ENCODE measurements at regions of chr12 and their contacts with region 1.

Region 1: GRCh38 chr12:50074936-50075807 is 10.0 kb upstream of the SMARCD1 start:
- DNase-seq: peak; percentile 87
- ATAC-seq: peak; percentile 97
- H3K4me3 ChIP-seq: no peak overlapping the region
- H3K4me3 Mint-ChIP-seq: no peak overlapping the region
- H3K27ac ChIP-seq: no peak overlapping the region
- H3K27ac Mint-ChIP-seq: no peak overlapping the region
- H3K4me1 ChIP-seq: peaks cover 0 to 12% of the 10 kb centered on the region in 2 donors
- H3K4me1 Mint-ChIP-seq: peaks cover 4% of the 10 kb centered on the region
- H3K27me3 ChIP-seq: no peaks in the 10 kb centered on the region
- H3K27me3 Mint-ChIP-seq: peaks cover 11% of the 10 kb centered on the region
- CTCF ChIP-seq: peak; percentile 95

Region 2: GRCh38 chr12:49903695-49904423 is 171.3 kb before region 1 on chr12 and contains the start of gene FAIM2:
- CTCF ChIA-PET with region 1: no interaction called
- POLR2A ChIA-PET with region 1: no interaction called
- intact Hi-C with region 1: no loop called
- DNase-seq: peak; percentile 36
- ATAC-seq: peak; percentile 54
- H3K4me3 ChIP-seq: peak within 1 kb of the TSS in 2 of 5 experiments; percentile 33
- H3K4me3 Mint-ChIP-seq: peak within 1 kb of the TSS; percentile 79
- H3K27ac ChIP-seq: no peak within 1 kb of the TSS
- H3K27ac Mint-ChIP-seq: no peak within 1 kb of the TSS
- H3K4me1 ChIP-seq: peaks cover 11% of the 10 kb centered on the region in 2 donors
- H3K4me1 Mint-ChIP-seq: peaks cover 12% of the 10 kb centered on the region
- H3K27me3 ChIP-seq: peaks cover 0 to 26% (median 6%) of the 10 kb centered on the region in 4 experiments
- H3K27me3 Mint-ChIP-seq: peaks cover 39% of the 10 kb centered on the region
- CTCF ChIP-seq: no peak
- total RNA-seq, gene FAIM2: not detected in 2 replicates

Region 3: GRCh38 chr12:50055831-50056638 is 19.1 kb before region 1 on chr12:
- CTCF ChIA-PET with region 1: interaction called, 16 read pairs
- POLR2A ChIA-PET with region 1: no interaction called
- intact Hi-C with region 1: no loop called
- DNase-seq: peak; percentile 79
- ATAC-seq: peak; percentile 79
- H3K4me3 ChIP-seq: peak overlapping the region in 2 of 5 experiments; percentile 13 to 21
- H3K4me3 Mint-ChIP-seq: peak overlapping the region; percentile 92
- H3K27ac ChIP-seq: no peak overlapping the region
- H3K27ac Mint-ChIP-seq: peak overlapping the region; percentile 34
- H3K4me1 ChIP-seq: peaks cover 22 to 23% of the 10 kb centered on the region in 2 donors
- H3K4me1 Mint-ChIP-seq: peaks cover 21% of the 10 kb centered on the region
- H3K27me3 ChIP-seq: peaks cover 0 to 60% (median 27%) of the 10 kb centered on the region in 4 experiments
- H3K27me3 Mint-ChIP-seq: peaks cover 67% of the 10 kb centered on the region
- CTCF ChIP-seq: peak; percentile 97

Region 4: DNA sequence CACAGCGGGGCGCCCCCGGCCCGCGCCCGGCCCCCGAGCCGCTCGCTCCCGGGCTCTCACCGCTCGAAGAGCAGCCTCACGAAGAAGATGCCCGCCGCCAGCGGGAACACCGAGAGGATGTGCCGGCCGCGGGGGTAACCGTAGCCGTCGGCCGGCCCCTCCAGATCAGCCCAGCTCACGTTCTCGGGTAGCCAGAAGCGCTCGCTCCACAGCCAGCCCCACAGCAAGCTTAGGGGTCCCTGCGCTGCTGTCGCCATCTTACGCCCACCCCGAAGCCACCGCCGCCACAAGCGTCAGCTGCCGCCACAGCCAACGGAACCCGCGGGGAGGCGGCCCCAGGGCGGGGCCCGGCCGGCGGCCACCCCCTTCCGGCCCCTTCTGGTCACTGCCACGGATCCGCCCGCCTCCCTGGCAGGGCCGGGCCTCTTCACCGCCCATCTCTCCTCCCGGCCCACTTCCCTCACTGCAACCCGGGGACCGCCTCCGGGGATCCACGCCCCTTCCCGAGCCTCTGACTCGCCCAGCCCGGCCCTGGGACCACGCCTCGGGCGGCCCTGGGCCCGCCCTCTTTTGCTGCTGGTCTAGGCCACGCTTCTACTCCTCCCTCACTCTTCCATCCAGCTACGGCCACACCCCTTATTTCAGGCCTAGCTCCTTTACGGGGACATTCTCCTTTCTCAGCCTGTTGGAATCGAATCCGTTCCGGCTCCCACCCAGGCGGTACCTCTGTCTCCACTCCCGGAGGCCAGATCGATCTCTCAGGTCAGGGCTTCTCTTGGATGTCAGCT is 92.1 kb after region 1 on chr12 and contains the start of gene CERS5:
- CTCF ChIA-PET with region 1: interaction called, 343 read pairs
- POLR2A ChIA-PET with region 1: no interaction called
- intact Hi-C with region 1: no loop called
- DNase-seq: peak; percentile 97
- ATAC-seq: peak; percentile 98
- H3K4me3 ChIP-seq: peak within 1 kb of the TSS; percentile 70 to 99 (median 74)
- H3K4me3 Mint-ChIP-seq: peak within 1 kb of the TSS; percentile 95
- H3K27ac ChIP-seq: peak within 1 kb of the TSS; percentile 83 to 90
- H3K27ac Mint-ChIP-seq: peak within 1 kb of the TSS; percentile 95
- H3K4me1 ChIP-seq: peaks cover 17 to 19% of the 10 kb centered on the region in 2 donors
- H3K4me1 Mint-ChIP-seq: peaks cover 25% of the 10 kb centered on the region
- H3K27me3 ChIP-seq: no peaks in the 10 kb centered on the region
- H3K27me3 Mint-ChIP-seq: no peaks in the 10 kb centered on the region
- CTCF ChIP-seq: no peak
- total RNA-seq, gene CERS5: 70.9 and 72.0 TPM in 2 replicates

Region 5: DNA sequence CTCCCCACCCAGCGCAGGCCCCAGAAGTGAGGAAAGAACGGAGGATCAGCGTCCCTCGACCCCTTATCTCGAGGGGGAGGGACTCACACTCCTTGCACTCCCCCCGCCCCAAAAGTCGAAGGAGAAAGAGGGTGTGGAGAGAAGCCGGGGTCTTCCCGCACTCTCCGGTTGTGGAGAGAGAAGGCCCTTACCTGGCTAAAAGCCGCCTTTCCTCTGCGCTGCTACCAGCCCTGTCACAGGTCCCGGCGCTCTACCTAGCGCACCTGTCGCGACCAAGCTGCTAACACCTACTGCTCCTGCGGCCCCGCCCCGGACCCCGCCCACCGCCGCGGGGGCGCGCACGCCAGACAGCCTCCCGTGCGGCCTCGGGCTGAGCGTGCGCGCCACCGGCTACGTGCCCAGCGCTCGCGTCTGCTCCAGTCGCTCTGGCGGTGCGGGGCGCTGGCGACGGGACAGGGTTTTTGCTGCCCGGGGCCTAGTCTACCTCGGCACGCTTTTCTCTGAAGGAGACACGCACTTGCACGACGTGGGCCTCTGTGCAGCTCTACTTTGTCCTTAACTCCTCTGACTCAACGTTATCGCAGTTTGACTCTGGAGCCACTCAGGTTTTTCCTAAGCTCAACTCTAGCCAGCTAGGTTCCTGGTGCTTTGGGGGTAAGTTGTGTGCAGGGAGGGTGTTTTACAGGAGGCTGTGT is 208.2 kb after region 1 on chr12 and contains the start of gene LIMA1:
- CTCF ChIA-PET with region 1: interaction called, 4 read pairs
- POLR2A ChIA-PET with region 1: no interaction called
- intact Hi-C with region 1: loop called (anchors 1 kb)
- DNase-seq: peak; percentile 93
- ATAC-seq: peak; percentile 98
- H3K4me3 ChIP-seq: peak within 1 kb of the TSS; percentile 61 to 86 (median 80)
- H3K4me3 Mint-ChIP-seq: peak within 1 kb of the TSS; percentile 95
- H3K27ac ChIP-seq: peak within 1 kb of the TSS; percentile 19 to 74
- H3K27ac Mint-ChIP-seq: peak within 1 kb of the TSS; percentile 83
- H3K4me1 ChIP-seq: peaks cover 11 to 18% of the 10 kb centered on the region in 2 donors
- H3K4me1 Mint-ChIP-seq: peaks cover 13% of the 10 kb centered on the region
- H3K27me3 ChIP-seq: peaks cover 0 to 8% (median 0%) of the 10 kb centered on the region in 4 experiments
- H3K27me3 Mint-ChIP-seq: peaks cover 4% of the 10 kb centered on the region
- CTCF ChIP-seq: peak; percentile 47
- total RNA-seq, gene LIMA1: 2.1 and 2.9 TPM in 2 replicates

Region 6: DNA sequence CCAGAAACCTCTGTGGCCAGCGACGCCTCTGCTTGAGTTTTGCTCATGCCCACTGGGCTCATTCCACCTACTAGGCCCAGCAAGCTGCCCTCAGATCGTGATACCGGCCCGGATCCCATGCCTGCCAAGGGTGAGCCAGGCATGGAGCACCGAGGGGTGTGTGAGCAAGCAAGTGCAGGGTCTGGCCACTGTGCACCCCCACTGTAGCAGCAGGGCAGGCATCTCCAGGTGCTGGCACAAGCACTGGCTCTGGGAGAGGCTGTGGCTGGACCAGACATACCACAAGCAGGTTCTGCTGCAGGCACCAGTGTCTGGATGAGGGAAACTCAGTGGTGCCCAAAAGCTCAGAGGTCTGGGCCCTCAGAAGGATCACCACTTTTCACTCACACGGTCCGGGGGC is 300.6 kb after region 1 on chr12:
- CTCF ChIA-PET with region 1: no interaction called
- POLR2A ChIA-PET with region 1: no interaction called
- intact Hi-C with region 1: no loop called
- DNase-seq: no peak
- ATAC-seq: no peak
- H3K4me3 ChIP-seq: no peak overlapping the region
- H3K4me3 Mint-ChIP-seq: no peak overlapping the region
- H3K27ac ChIP-seq: no peak overlapping the region
- H3K27ac Mint-ChIP-seq: no peak overlapping the region
- H3K4me1 ChIP-seq: no peaks in the 10 kb centered on the region
- H3K4me1 Mint-ChIP-seq: no peaks in the 10 kb centered on the region
- H3K27me3 ChIP-seq: no peaks in the 10 kb centered on the region
- H3K27me3 Mint-ChIP-seq: no peaks in the 10 kb centered on the region
- CTCF ChIP-seq: no peak

Region 7: DNA sequence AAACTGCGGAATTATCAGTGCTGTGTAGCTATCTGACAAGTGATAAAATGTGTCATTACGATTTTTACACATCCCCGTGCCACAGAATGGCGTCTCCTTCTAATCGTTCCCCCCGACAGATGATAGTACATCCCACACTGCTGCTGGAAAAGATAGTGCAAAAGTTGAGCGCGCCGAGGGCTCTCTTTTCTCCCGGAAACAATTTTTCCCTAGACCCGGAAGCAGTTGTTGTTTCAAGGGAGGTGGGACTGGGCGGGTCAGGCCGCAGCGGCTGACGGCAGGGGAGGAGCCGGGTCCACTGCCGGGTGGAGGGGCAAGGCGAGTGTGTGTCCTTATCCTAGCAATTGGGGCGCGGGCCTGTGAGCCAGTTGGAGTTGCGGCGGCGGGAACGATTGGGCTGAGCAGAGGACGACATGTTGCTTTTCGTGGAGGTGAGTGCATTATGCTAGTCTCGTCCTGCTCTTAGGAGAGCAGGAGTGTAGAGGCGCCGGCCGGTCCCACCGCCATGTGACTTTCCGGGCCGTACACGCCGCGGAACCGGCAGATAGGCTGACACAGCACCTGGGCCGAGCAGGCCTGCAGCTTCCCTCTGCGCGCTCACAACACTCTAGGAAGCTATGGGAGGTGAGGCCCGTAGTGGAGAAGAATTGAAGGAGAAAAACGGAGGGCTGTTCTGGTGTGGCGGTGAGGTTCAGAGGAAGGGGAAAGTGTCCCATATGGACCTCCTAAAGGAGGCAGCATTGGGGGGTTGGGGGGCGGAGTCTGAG is 325.6 kb after region 1 on chr12 and contains the start of gene LARP4:
- CTCF ChIA-PET with region 1: no interaction called
- POLR2A ChIA-PET with region 1: no interaction called
- intact Hi-C with region 1: no loop called
- DNase-seq: peak; percentile 93
- ATAC-seq: peak; percentile 94
- H3K4me3 ChIP-seq: peak within 1 kb of the TSS; percentile 53 to 90 (median 81)
- H3K4me3 Mint-ChIP-seq: peak within 1 kb of the TSS; percentile 92
- H3K27ac ChIP-seq: peak within 1 kb of the TSS; percentile 62 to 88
- H3K27ac Mint-ChIP-seq: peak within 1 kb of the TSS; percentile 93
- H3K4me1 ChIP-seq: peaks cover 22 to 24% of the 10 kb centered on the region in 2 donors
- H3K4me1 Mint-ChIP-seq: peaks cover 38% of the 10 kb centered on the region
- H3K27me3 ChIP-seq: no peaks in the 10 kb centered on the region
- H3K27me3 Mint-ChIP-seq: peaks cover 9% of the 10 kb centered on the region
- CTCF ChIP-seq: no peak
- total RNA-seq, gene LARP4: 42.0 and 48.4 TPM in 2 replicates